HAP-1 (cell line): ENCODE measurements at regions of chr1 and their contacts with region 1.

Region 1: GRCh38 chr1:245156081-245156735 is 1.4 kb downstream of the KIF26B start:
- DNase-seq: peak; percentile 75 to 91
- H3K4me3 ChIP-seq: peak overlapping the region; percentile 36
- H3K4me1 ChIP-seq: peaks cover 7% of the 10 kb centered on the region
- H3K27me3 ChIP-seq: peaks cover 32% of the 10 kb centered on the region

Region 2: GRCh38 chr1:246002725-246003441 is 846.7 kb after region 1 on chr1:
- in situ Hi-C with region 1: loop called (anchors 5 kb)
- DNase-seq: peak; percentile 64 to 89
- H3K4me3 ChIP-seq: no peak overlapping the region
- H3K4me1 ChIP-seq: no peaks in the 10 kb centered on the region
- H3K27me3 ChIP-seq: no peaks in the 10 kb centered on the region

Region 3: GRCh38 chr1:246497331-246497915 is 1341.2 kb after region 1 on chr1:
- in situ Hi-C with region 1: loop called (anchors 25 kb)
- DNase-seq: peak; percentile 24 to 78
- H3K4me3 ChIP-seq: no peak overlapping the region
- H3K4me1 ChIP-seq: peaks cover 7% of the 10 kb centered on the region
- H3K27me3 ChIP-seq: no peaks in the 10 kb centered on the region